ENCODE measurements at regions of chr6 and their contacts with region 1.

Region 1: GRCh38 chr6:2765166-2765895 is at the start of gene WRNIP1:
- DNase-seq: peak; percentile 96
- H3K4me3 Mint-ChIP-seq: peak within 1 kb of the TSS; percentile 90
- H3K27ac Mint-ChIP-seq: peak within 1 kb of the TSS; percentile 98
- H3K4me1 Mint-ChIP-seq: peaks cover 47% of the 10 kb centered on the region
- H3K27me3 Mint-ChIP-seq: no peaks in the 10 kb centered on the region
- total RNA-seq, gene WRNIP1: 47.2 and 47.8 TPM in 2 replicates

Region 2: GRCh38 chr6:2111162-2111677 is 654.1 kb before region 1 on chr6:
- intact Hi-C with region 1: loop called (anchors 10 kb)
- DNase-seq: no peak
- H3K4me3 Mint-ChIP-seq: peak overlapping the region; percentile 64
- H3K27ac Mint-ChIP-seq: peak overlapping the region; percentile 88
- H3K4me1 Mint-ChIP-seq: peaks cover 27% of the 10 kb centered on the region
- H3K27me3 Mint-ChIP-seq: peaks cover 2% of the 10 kb centered on the region

Region 3: GRCh38 chr6:2542858-2543218 is 222.5 kb before region 1 on chr6:
- intact Hi-C with region 1: loop called (anchors 5 kb)
- DNase-seq: peak; percentile 74
- H3K4me3 Mint-ChIP-seq: no peak overlapping the region
- H3K27ac Mint-ChIP-seq: peak overlapping the region; percentile 18
- H3K4me1 Mint-ChIP-seq: peaks cover 32% of the 10 kb centered on the region
- H3K27me3 Mint-ChIP-seq: peaks cover 64% of the 10 kb centered on the region

Region 4: DNA sequence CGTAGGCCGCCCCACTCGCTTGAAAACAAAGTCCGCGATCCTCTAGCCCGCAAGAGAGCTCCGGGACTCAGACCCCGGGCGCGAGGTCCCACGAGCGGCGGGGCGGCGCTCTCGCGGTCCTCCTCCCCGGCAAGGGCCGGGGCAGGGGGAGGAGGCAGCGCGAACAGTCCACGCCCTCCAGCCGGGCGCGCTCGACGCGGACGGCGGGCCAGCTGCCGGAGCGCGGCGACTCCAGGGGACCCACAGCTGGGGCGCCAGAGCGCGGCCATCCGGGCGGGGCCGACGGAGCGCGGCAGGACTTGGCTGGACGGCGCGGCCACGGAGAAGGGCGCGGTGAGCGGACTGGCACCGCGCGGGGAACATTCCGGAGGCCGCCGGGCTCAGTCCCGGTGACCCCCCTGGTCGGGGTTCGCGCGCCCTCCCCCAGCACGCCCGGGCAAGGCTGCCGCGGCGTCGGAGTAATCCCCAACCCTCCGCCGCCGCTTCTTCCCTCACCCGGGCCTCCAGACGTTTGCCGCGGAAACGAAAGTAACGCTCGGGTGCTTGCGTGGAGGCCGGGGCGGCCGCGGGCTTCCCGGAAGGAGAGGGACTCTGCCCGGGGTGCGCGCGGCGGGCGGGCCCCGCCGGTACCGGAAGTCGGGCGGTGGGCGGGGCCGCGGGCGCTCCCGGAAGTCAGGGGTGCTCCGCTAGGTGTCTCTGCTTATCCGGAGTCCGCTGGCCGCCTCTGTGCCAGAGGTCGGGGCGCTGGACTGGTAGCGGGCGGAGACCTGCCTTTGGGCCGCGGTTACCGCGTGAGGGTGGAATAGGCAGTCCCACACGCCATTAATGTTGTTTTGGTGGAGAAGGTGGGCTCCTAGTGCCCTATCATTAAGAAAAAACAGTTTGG is 303.2 kb after region 1 on chr6 and contains the start of gene RIPK1:
- intact Hi-C with region 1: loop called (anchors 1 kb)
- DNase-seq: peak; percentile 95
- H3K4me3 Mint-ChIP-seq: peak within 1 kb of the TSS; percentile 95
- H3K27ac Mint-ChIP-seq: peak within 1 kb of the TSS; percentile 95
- H3K4me1 Mint-ChIP-seq: peaks cover 55% of the 10 kb centered on the region
- H3K27me3 Mint-ChIP-seq: no peaks in the 10 kb centered on the region
- total RNA-seq, gene RIPK1: 18.3 and 19.0 TPM in 2 replicates

Region 5: GRCh38 chr6:3258720-3259490 is 493.6 kb after region 1 on chr6 and contains the start of gene PSMG4:
- intact Hi-C with region 1: loop called (anchors 10 kb)
- DNase-seq: peak; percentile 90
- H3K4me3 Mint-ChIP-seq: peak within 1 kb of the TSS; percentile 98
- H3K27ac Mint-ChIP-seq: peak within 1 kb of the TSS; percentile 88
- H3K4me1 Mint-ChIP-seq: peaks cover 25% of the 10 kb centered on the region
- H3K27me3 Mint-ChIP-seq: peaks cover 17% of the 10 kb centered on the region
- total RNA-seq, gene PSMG4: 26.4 and 30.9 TPM in 2 replicates

Measured in activated T-helper 2 cell treated with anti-CD3 and anti-CD28 coated beads, Interferon-gamma antibody, Interleukin-2, Interleukin-4, amounts not matched to agents 10 μg/mL and 5 μg/mL and 100 μg/mL, durations not matched to agents 14 hours and 24 hours and 36 hours (primary cell).